Cardiac septum (tissue), 1 donor: ENCODE measurements at regions of chr5 and their contacts with region 1.

Region 1: GRCh38 chr5:41903892-41904799 is at the start of gene RIMOC1:
- DNase-seq: peak; percentile 99
- total RNA-seq, gene RIMOC1: 15.3 TPM

Region 2: DNA sequence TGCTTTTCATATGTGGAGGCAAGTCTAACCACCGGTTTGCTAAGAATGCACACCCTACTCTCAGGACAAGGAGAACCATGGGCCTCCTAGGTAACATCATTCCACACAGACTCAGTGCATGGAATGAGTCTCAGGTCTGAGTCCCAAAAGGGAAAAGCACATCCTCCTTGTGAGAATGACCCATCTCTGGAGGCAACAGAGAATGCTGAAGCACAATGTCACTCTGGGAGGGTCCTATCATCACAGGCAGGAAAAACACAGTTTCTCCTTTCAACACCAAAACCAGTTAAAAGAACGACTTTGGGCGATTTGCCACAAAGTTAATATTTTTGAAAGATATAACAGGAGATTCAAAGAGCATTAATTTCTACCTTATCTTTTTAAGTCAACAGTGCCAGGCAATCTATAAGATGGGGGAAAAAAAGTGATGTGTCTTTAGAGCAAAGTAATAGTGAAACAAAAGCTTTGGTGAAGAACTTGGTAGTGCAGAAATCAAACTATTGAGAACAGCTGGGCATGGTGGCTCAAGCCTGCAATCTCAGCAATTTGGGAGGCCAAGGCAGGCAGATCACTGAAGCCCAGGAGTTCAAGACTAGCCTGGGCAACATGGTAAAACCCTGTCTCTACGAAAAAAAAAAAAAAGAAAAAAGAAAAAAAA is 131.2 kb before region 1 on chr5:
- intact Hi-C with region 1: no loop called
- DNase-seq: no peak

Region 3: GRCh38 chr5:41924872-41925554 is 20.9 kb after region 1 on chr5 and contains the start of gene FBXO4:
- intact Hi-C with region 1: loop called (anchors 2 kb)
- DNase-seq: peak; percentile 95
- total RNA-seq, gene FBXO4: 5.1 TPM